Activated CD4-positive, alpha-beta memory T cell treated with anti-CD3 and anti-CD28 coated beads for 36 hours (primary cell): ENCODE measurements at regions of chr5 and their contacts with region 1.

Region 1: DNA sequence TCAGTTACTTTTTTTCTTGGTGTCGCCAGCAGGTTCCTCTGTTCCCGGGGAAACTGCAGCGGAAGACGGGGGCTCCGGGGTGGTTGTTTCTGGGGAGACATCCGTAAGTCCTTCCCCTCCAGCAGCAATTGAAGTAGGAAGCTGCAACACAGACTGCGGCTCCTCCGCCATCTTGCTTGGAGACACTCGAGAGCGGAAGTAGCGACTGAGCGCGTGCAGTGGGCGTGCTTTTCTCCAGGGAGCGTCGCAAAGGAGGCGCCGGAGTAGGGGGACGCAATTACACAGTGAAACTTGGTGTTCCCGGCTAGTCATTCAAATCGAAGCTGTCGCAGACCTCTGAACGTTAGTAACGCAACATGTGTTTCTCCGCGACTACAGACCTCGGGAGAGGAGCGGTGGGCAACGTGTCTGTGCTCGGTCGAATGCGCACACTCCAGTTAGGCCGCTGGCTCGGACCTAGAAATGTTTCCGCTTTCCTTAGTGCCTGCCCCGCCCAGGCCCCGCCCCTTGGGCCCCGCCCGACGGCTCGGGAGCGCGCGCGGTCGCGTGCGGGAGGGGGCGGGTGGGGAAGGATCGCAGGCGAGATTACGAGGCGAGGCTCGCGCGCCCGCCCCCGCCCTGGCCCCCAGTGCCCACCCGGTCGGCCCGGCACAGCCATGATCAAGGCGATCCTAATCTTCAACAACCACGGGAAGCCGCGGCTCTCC is at the starts of genes AP3S1 and ATG12:
- DNase-seq: peak; percentile 93
- H3K4me3 Mint-ChIP-seq: peak within 1 kb of the TSS; percentile 95
- H3K27ac Mint-ChIP-seq: peak within 1 kb of the TSS; percentile 100
- H3K4me1 Mint-ChIP-seq: peaks cover 49% of the 10 kb centered on the region
- H3K27me3 Mint-ChIP-seq: no peaks in the 10 kb centered on the region
- total RNA-seq, gene AP3S1: 85.7 to 87.6 TPM
- total RNA-seq, gene ATG12: 40.6 to 41.9 TPM

Region 2: GRCh38 chr5:115262321-115263077 is 579.0 kb before region 1 on chr5 and contains the start of gene PGGT1B:
- CTCF ChIA-PET with region 1: no interaction called
- POLR2A ChIA-PET with region 1: no interaction called
- intact Hi-C with region 1: loop called (anchors 5 kb)
- DNase-seq: peak; percentile 85
- H3K4me3 Mint-ChIP-seq: peak within 1 kb of the TSS; percentile 92
- H3K27ac Mint-ChIP-seq: peak within 1 kb of the TSS; percentile 80
- H3K4me1 Mint-ChIP-seq: peaks cover 47% of the 10 kb centered on the region
- H3K27me3 Mint-ChIP-seq: no peaks in the 10 kb centered on the region
- total RNA-seq, gene PGGT1B: 38.7 TPM

Region 3: DNA sequence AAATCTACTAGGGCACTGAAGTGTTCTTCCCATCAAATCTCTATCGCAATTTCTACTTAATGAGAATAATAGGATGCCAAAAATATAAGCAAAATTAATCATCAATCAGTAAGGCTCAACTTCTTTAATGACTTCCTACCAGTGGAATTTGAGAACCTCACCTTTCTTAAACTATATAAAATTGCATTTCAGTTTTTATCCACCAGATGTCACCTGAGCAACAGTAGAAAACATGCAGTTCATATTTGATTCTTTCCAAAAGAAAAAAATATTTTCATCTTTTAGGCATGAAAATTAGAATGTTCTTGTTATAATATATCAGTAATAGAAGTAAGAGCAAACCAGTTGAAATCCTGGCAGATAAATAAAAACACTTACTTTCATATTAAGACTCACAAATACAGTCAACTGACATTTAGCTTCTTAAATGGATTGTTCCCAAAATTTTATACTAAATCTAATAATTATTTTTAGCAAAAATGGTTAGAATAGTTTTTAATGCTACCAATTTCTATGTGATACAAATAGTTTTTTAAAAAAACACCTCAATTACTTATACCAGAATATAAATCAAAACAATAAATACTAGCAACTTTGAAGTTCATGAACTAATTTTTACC is 531.7 kb before region 1 on chr5:
- CTCF ChIA-PET with region 1: no interaction called
- POLR2A ChIA-PET with region 1: no interaction called
- intact Hi-C with region 1: loop called (anchors 5 kb)
- DNase-seq: no peak
- H3K4me3 Mint-ChIP-seq: no peak overlapping the region
- H3K27ac Mint-ChIP-seq: no peak overlapping the region
- H3K4me1 Mint-ChIP-seq: no peaks in the 10 kb centered on the region
- H3K27me3 Mint-ChIP-seq: peaks cover 8% of the 10 kb centered on the region

Region 4: GRCh38 chr5:115544436-115545350 is 296.8 kb before region 1 on chr5 and contains the start of gene FEM1C:
- CTCF ChIA-PET with region 1: interaction called, 3 read pairs
- POLR2A ChIA-PET with region 1: interaction called, 7 read pairs
- intact Hi-C with region 1: loop called (anchors 1 kb)
- DNase-seq: peak; percentile 98
- H3K4me3 Mint-ChIP-seq: peak within 1 kb of the TSS; percentile 96
- H3K27ac Mint-ChIP-seq: peak within 1 kb of the TSS; percentile 98
- H3K4me1 Mint-ChIP-seq: peaks cover 37% of the 10 kb centered on the region
- H3K27me3 Mint-ChIP-seq: no peaks in the 10 kb centered on the region
- total RNA-seq, gene FEM1C: 12.2 to 12.5 TPM

Region 5: GRCh38 chr5:115634343-115635132 is 207.0 kb before region 1 on chr5:
- CTCF ChIA-PET with region 1: interaction called, 3 read pairs
- POLR2A ChIA-PET with region 1: no interaction called
- intact Hi-C with region 1: loop called (anchors 1 kb)
- DNase-seq: peak; percentile 90
- H3K4me3 Mint-ChIP-seq: no peak overlapping the region
- H3K27ac Mint-ChIP-seq: no peak overlapping the region
- H3K4me1 Mint-ChIP-seq: peaks cover 27% of the 10 kb centered on the region
- H3K27me3 Mint-ChIP-seq: peaks cover 23% of the 10 kb centered on the region

Region 6: DNA sequence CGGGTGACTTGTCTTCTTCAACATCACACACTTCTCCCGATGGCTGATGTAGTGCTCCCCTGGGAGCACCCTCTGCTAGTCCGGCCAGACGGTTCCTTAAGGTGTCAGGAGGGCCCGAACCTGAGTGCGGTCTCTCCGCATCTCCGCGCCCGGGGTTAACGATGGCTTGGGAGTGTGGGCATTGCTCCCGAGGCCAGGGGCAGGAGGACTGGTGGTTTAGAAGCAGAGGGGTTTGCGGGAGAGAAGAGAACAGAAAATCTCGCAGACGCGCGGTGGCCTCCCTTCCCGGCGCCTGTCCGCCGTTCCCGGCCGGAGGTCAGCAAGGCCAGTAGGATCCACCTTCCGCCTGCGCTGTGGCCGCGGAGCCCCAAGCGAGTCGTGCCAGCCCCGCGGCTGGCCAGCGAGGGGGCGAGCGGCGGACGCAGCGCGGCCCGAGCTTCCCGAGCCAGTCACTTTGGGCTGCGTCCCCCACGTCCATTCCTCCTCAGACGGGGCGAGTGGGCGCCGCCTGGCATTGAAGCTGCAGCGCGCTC is 25.8 kb before region 1 on chr5:
- CTCF ChIA-PET with region 1: no interaction called
- POLR2A ChIA-PET with region 1: no interaction called
- intact Hi-C with region 1: no loop called
- DNase-seq: no peak
- H3K4me3 Mint-ChIP-seq: peak overlapping the region; percentile 61
- H3K27ac Mint-ChIP-seq: no peak overlapping the region
- H3K4me1 Mint-ChIP-seq: peaks cover 16% of the 10 kb centered on the region
- H3K27me3 Mint-ChIP-seq: peaks cover 67% of the 10 kb centered on the region

Region 7: GRCh38 chr5:115825948-115826347 is 15.6 kb before region 1 on chr5:
- CTCF ChIA-PET with region 1: no interaction called
- POLR2A ChIA-PET with region 1: no interaction called
- intact Hi-C with region 1: no loop called
- DNase-seq: no peak
- H3K4me3 Mint-ChIP-seq: no peak overlapping the region
- H3K27ac Mint-ChIP-seq: no peak overlapping the region
- H3K4me1 Mint-ChIP-seq: no peaks in the 10 kb centered on the region
- H3K27me3 Mint-ChIP-seq: peaks cover 1% of the 10 kb centered on the region

Region 8: GRCh38 chr5:116068028-116068632 is 226.6 kb after region 1 on chr5:
- CTCF ChIA-PET with region 1: interaction called, 8 read pairs
- POLR2A ChIA-PET with region 1: no interaction called
- intact Hi-C with region 1: loop called (anchors 1 kb)
- DNase-seq: no peak
- H3K4me3 Mint-ChIP-seq: no peak overlapping the region
- H3K27ac Mint-ChIP-seq: no peak overlapping the region
- H3K4me1 Mint-ChIP-seq: no peaks in the 10 kb centered on the region
- H3K27me3 Mint-ChIP-seq: peaks cover 25% of the 10 kb centered on the region